Aorta (tissue), 5 donors: ENCODE measurements at regions of chr2 and their contacts with region 1.

Region 1: DNA sequence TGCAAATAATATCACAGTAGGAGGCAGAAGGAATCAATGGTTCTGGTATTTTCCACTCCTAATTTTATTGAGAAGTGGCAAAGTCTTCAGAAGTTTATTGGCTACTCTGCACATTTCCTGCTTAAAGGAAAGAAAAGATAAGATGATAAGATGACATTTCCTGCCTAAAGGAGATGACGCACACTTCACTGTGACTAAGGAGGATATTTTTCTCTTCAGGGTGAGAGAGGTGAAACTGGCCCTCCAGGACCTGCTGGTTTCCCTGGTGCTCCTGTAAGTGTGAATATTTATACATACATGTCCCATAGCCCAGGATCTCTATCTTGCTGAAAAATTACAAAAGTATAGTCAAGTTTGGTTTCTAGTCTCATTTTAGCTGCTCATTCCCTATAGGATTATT is 27.9 kb downstream of the COL3A1 start:
- DNase-seq: no peak
- ATAC-seq: no peak
- H3K4me3 ChIP-seq: no peak overlapping the region
- H3K27ac ChIP-seq: no peak overlapping the region
- H3K4me1 ChIP-seq: no peaks in the 10 kb centered on the region
- H3K27me3 ChIP-seq: no peaks in the 10 kb centered on the region

Region 2: DNA sequence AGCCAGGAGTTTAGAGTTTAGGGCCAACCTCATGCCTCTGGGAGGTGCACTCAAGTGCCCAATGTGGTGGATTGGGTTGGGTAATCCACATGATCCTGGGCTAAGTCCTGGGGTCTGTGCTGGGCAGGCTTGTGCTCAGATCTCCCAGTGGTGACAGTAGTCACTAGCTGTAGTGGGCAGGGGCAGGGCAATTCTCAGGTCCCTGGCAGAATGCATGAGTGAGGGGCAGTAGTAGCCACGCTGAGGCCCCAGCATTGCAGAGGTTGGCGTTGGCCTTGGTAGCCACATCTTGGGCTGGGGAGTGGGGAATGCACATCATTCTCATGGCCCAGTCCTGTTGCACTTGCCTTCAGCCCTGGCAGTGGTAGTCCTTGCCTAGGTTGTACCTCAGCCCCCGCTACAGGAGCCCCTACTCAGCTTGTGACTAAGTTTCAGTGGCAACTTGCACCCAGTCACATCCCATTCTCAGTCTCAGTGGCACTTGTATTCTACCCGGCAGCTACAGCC is 440.6 kb before region 1 on chr2:
- intact Hi-C with region 1: no loop called
- DNase-seq: peak in 1 of 2 donors; percentile 61
- ATAC-seq: peak; percentile 26
- H3K4me3 ChIP-seq: no peak overlapping the region
- H3K27ac ChIP-seq: no peak overlapping the region
- H3K4me1 ChIP-seq: no peaks in the 10 kb centered on the region
- H3K27me3 ChIP-seq: no peaks in the 10 kb centered on the region

Region 3: GRCh38 chr2:189049709-189050164 is 47.7 kb after region 1 on chr2:
- intact Hi-C with region 1: loop called (anchors 5 to 10 kb)
- DNase-seq: no peak
- ATAC-seq: no peak
- H3K4me3 ChIP-seq: no peak overlapping the region
- H3K27ac ChIP-seq: no peak overlapping the region
- H3K4me1 ChIP-seq: no peaks in the 10 kb centered on the region
- H3K27me3 ChIP-seq: no peaks in the 10 kb centered on the region

Region 4: GRCh38 chr2:189137519-189137918 is 135.4 kb after region 1 on chr2:
- intact Hi-C with region 1: no loop called
- DNase-seq: no peak
- ATAC-seq: no peak
- H3K4me3 ChIP-seq: no peak overlapping the region
- H3K27ac ChIP-seq: no peak overlapping the region
- H3K4me1 ChIP-seq: no peaks in the 10 kb centered on the region
- H3K27me3 ChIP-seq: no peaks in the 10 kb centered on the region